Motor neuron (in vitro differentiated cells): ENCODE measurements at regions of chr18 and their contacts with region 1.

Region 1: DNA sequence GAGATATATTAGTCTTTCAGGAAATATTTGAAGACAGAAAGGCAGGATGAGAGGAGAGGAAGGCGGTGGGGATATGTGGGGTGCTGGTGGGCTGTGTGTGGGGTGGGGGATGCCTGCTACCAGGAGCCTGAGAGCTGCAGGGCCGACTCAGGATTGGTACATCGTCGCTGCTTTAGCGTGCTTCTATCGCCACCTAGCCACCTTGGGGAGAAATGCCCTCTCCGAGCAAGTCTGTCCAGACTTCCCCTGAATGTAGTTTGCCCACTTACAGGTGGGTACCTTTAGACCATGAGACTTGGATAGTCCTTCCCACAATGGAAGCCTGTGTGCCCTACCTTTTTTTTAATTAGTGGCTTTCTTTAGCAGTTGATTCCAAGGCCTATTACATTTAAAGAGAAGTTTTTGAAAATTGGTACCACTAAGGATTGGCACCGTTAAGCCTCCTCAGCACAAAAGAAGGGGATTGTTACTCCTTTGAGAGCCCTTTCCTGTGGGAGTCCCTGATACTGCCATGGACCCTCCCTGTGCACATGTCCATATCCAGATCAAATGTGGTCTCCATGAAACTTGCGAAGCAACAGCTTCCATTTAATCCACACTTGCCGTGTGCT is 114.1 kb upstream of the NDUFV2 start:
- ATAC-seq: peak; percentile 64 to 98 (median 92)
- H3K4me3 ChIP-seq: no peak overlapping the region
- H3K27ac ChIP-seq: no peak overlapping the region
- H3K4me1 ChIP-seq: peaks cover 6 to 9% of the 10 kb centered on the region in 2 donors

Region 2: GRCh38 chr18:8654503-8655451 is 333.6 kb before region 1 on chr18:
- in situ Hi-C with region 1: loop called in 8 of 9 experiments (anchors 10 to 25 kb)
- ATAC-seq: peak in 1 of 8 experiments; percentile 41
- H3K4me3 ChIP-seq: no peak overlapping the region
- H3K27ac ChIP-seq: no peak overlapping the region
- H3K4me1 ChIP-seq: peaks cover 14 to 16% of the 10 kb centered on the region in 2 donors

Region 3: DNA sequence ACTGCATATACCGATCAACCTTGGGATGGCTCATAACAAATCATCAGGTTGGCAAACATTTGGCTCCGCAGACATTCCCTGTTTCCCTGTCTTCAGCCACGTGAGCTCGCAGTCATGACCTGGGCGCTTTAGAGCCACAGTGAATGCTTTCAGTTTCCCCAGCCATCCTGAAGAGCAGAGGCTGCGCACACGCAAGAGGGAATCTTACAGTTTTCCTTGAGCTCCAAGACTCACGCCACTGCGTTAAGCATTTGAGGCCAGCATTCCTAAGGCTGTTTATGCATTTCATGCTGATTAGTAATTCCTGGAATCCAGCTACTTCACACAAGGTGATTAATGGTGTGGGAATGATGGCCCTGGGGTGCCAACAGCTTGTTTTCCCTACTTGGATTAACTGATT is 187.9 kb before region 1 on chr18:
- in situ Hi-C with region 1: loop called in 1 of 9 experiments (anchors 25 kb)
- ATAC-seq: peak; percentile 37 to 91 (median 50)
- H3K4me3 ChIP-seq: no peak overlapping the region
- H3K27ac ChIP-seq: no peak overlapping the region
- H3K4me1 ChIP-seq: peaks cover 9 to 16% of the 10 kb centered on the region in 2 donors

Region 4: GRCh38 chr18:8890957-8891464 is 97.4 kb before region 1 on chr18:
- in situ Hi-C with region 1: loop called in 1 of 9 experiments (anchors 25 kb)
- ATAC-seq: peak; percentile 99 to 100 (median 100)
- H3K4me3 ChIP-seq: no peak overlapping the region
- H3K27ac ChIP-seq: no peak overlapping the region
- H3K4me1 ChIP-seq: peaks cover 0 to 9% of the 10 kb centered on the region in 2 donors

Region 5: GRCh38 chr18:9095297-9096006 is 107.1 kb after region 1 on chr18:
- in situ Hi-C with region 1: loop called in 1 of 9 experiments (anchors 25 kb)
- ATAC-seq: peak in 7 of 8 experiments; percentile 46 to 96 (median 76)
- H3K4me3 ChIP-seq: no peak overlapping the region
- H3K27ac ChIP-seq: no peak overlapping the region
- H3K4me1 ChIP-seq: peaks cover 13 to 14% of the 10 kb centered on the region in 2 donors

Region 6: DNA sequence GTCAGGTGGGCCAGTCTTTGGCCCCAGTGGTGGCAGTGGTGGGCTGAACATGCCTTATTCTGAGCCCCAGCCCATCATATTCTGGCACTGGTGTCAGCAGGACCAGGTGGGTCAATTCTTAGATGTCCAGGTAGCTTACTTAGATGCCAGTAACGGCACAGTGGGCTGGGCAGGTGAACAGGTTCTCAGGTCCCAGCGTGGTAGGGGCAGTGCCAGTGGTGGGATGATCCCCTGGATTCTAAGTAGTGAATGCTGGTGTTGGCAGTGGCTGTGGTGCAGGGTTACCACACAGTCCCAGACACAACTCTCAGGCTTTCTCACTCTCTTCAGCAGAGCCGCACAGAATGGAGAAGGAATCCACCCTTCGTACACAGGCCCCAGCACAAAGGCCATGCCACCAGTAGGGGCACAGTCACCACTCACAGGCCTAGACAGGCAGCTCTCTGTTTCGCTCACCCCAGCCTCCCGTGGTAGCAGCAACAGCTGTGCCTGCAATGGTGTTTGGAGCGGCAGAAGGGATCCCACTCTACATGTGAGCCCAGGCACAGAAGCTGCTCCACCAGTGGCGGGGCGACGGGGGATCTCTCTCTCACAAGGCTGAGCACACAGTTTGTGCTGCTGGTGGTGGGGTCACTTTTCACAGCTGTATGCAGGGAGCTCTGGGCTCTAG is 245.5 kb after region 1 on chr18:
- in situ Hi-C with region 1: no loop called
- ATAC-seq: no peak
- H3K4me3 ChIP-seq: no peak overlapping the region
- H3K27ac ChIP-seq: no peak overlapping the region
- H3K4me1 ChIP-seq: no peaks in the 10 kb centered on the region